Endothelial cell of umbilical vein (primary cell): ENCODE measurements at regions of chr10 and their contacts with region 1.

Region 1: DNA sequence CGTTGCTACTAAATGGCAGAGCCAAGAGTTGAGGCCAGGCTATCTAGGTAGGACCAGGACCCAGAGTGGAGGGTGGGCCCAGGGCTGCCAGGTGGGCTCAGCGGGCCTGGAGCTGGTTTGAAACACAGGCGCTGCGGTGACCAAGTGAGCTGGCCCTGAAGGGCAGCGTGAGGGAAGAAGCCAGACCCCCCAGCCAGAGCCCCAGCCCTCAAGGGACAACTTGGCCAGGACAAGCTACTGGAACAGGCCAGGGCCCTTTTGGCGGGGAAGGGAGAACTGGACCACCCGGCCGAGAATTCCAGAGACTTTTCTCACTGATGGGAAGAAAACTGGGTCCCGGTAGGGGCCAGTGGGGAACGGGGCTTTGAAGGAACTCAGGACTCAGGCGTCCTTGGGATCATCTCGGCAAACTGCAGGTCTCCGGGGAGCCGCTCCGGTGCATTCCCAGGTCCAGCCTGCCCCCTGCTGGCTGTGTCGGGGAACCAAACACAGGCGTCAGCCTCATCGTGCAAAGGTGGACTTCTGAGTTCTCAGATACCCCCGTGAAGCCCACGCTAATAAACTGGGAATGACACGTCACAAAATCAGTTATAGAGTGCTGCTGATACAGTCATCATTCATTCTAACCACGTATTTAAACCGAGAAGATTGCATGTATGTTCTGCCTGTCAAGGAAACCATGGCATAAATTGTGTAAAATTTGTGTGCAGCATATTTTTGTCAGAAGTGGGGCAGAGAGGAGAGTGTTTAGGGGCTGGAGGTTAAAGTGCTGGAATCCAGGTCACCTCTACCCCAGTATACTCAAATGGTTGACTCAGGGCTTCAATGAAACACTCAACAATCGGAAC is 76.0 kb upstream of the CPXM2 start:
- DNase-seq: peak; percentile 57
- H3K4me3 ChIP-seq: no peak overlapping the region
- H3K27ac ChIP-seq: no peak overlapping the region
- H3K4me1 ChIP-seq: no peaks in the 10 kb centered on the region
- H3K27me3 ChIP-seq: peaks cover 0 to 2% of the 10 kb centered on the region in 2 experiments
- CTCF ChIP-seq: peak; percentile 87 to 92
- POLR2A ChIP-seq: no peak

Region 2: DNA sequence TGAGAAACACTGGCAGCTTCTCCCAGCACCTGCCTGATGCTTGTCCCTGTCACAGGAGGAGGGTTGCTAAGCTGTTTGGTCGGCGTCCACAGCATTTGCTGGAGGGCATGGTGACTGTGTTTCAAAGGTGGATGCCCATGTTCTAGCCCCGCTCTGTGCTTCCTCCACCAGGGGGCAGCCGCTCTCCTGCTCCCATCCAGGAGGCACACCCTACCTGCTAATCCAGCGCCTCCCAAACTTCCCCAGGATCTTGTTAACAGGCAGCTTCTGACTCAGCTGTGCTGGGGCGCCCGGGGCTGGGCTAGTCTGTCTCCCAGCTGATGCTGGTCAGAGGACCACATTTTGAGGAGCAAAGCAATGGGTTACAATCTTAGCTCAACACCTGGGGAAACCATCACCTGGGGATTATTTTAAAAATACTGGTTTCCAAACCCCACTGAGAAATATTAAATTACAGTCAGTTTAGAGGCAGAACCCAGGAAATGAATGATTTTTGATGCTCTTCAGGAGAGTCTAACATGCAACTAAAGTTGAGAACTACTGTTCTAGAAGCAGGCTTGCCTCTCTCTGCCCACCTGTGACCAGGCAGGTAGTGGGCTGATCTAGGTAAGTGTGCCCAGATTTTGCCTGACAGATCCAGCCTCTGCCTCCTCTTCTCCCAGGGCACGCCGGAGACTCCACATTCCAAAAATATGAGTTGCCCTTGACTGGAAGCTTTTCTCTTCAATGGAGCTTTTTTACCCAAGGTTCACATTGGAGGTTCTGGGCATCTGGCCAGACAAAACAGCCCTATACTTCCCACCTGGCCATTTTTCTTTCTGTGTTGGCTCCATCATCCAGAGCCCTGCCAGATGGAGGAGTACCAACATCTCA is 394.1 kb before region 1 on chr10:
- CTCF ChIA-PET with region 1: interaction called, 13 read pairs
- POLR2A ChIA-PET with region 1: no interaction called
- dilution Hi-C with region 1: no loop called
- intact Hi-C with region 1: no loop called
- DNase-seq: peak; percentile 8
- H3K4me3 ChIP-seq: no peak overlapping the region
- H3K27ac ChIP-seq: no peak overlapping the region
- H3K4me1 ChIP-seq: no peaks in the 10 kb centered on the region
- H3K27me3 ChIP-seq: no peaks in the 10 kb centered on the region
- CTCF ChIP-seq: peak; percentile 47 to 70
- POLR2A ChIP-seq: no peak

Region 3: GRCh38 chr10:123582084-123582989 is 385.3 kb before region 1 on chr10:
- CTCF ChIA-PET with region 1: interaction called, 122 read pairs
- POLR2A ChIA-PET with region 1: no interaction called
- dilution Hi-C with region 1: no loop called
- intact Hi-C with region 1: loop called (anchors 1 kb)
- DNase-seq: peak; percentile 69
- H3K4me3 ChIP-seq: no peak overlapping the region
- H3K27ac ChIP-seq: no peak overlapping the region
- H3K4me1 ChIP-seq: no peaks in the 10 kb centered on the region
- H3K27me3 ChIP-seq: peaks cover 0 to 1% of the 10 kb centered on the region in 2 experiments
- CTCF ChIP-seq: peak; percentile 83 to 89
- POLR2A ChIP-seq: no peak

Region 4: DNA sequence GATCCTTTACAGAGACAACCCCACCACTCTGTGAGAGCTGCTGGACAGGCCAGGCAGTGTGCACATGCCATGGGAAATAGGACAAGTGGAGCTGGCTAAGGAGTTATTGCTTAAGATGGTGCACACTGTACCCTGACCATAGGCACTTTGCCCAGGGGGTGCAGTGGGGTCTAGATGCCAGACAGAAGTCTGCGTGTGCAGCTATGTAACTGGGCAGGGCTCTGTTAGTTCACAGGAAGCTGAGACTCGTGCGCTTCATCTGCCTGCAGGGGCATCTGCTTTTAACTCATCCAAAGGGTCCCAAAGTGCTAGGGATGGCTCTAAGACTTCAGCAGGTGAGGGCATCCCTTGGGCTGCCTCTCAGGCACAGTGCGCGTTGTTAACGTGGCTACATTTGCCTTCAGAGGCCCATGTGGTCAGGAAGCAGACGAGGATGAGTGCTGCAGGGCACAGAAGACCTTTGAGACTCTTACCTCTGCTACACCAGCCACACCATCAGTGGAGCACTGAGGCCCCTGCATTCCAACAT is 379.2 kb before region 1 on chr10:
- CTCF ChIA-PET with region 1: interaction called, 122 read pairs
- POLR2A ChIA-PET with region 1: no interaction called
- dilution Hi-C with region 1: no loop called
- intact Hi-C with region 1: no loop called
- DNase-seq: no peak
- H3K4me3 ChIP-seq: no peak overlapping the region
- H3K27ac ChIP-seq: no peak overlapping the region
- H3K4me1 ChIP-seq: no peaks in the 10 kb centered on the region
- H3K27me3 ChIP-seq: peaks cover 0 to 1% of the 10 kb centered on the region in 2 experiments
- CTCF ChIP-seq: no peak
- POLR2A ChIP-seq: no peak

Region 5: DNA sequence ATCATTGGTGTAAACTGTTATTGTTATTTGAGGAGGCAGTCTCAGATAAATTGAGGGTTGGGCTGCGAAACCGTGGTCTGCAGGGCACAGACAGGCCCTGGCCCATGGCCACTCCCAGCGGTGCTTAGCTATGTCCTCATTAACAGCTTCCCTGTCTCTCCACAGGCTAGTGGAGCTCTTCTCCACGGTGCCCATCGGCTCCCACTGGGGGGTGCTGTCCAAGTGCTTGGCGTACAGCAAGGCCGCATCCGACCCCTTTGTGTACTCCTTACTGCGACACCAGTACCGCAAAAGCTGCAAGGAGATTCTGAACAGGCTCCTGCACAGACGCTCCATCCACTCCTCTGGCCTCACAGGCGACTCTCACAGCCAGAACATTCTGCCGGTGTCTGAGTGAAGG is 279.9 kb before region 1 on chr10:
- CTCF ChIA-PET with region 1: interaction called, 3 read pairs
- POLR2A ChIA-PET with region 1: no interaction called
- dilution Hi-C with region 1: no loop called
- intact Hi-C with region 1: loop called (anchors 5 kb)
- DNase-seq: no peak
- H3K4me3 ChIP-seq: no peak overlapping the region
- H3K27ac ChIP-seq: no peak overlapping the region
- H3K4me1 ChIP-seq: no peaks in the 10 kb centered on the region
- H3K27me3 ChIP-seq: no peaks in the 10 kb centered on the region
- CTCF ChIP-seq: no peak
- POLR2A ChIP-seq: no peak

Region 6: GRCh38 chr10:123759501-123760031 is 208.1 kb before region 1 on chr10:
- CTCF ChIA-PET with region 1: no interaction called
- POLR2A ChIA-PET with region 1: no interaction called
- dilution Hi-C with region 1: no loop called
- intact Hi-C with region 1: loop called (anchors 10 kb)
- DNase-seq: no peak
- H3K4me3 ChIP-seq: no peak overlapping the region
- H3K27ac ChIP-seq: no peak overlapping the region
- H3K4me1 ChIP-seq: no peaks in the 10 kb centered on the region
- H3K27me3 ChIP-seq: no peaks in the 10 kb centered on the region
- CTCF ChIP-seq: no peak
- POLR2A ChIP-seq: no peak

Region 7: DNA sequence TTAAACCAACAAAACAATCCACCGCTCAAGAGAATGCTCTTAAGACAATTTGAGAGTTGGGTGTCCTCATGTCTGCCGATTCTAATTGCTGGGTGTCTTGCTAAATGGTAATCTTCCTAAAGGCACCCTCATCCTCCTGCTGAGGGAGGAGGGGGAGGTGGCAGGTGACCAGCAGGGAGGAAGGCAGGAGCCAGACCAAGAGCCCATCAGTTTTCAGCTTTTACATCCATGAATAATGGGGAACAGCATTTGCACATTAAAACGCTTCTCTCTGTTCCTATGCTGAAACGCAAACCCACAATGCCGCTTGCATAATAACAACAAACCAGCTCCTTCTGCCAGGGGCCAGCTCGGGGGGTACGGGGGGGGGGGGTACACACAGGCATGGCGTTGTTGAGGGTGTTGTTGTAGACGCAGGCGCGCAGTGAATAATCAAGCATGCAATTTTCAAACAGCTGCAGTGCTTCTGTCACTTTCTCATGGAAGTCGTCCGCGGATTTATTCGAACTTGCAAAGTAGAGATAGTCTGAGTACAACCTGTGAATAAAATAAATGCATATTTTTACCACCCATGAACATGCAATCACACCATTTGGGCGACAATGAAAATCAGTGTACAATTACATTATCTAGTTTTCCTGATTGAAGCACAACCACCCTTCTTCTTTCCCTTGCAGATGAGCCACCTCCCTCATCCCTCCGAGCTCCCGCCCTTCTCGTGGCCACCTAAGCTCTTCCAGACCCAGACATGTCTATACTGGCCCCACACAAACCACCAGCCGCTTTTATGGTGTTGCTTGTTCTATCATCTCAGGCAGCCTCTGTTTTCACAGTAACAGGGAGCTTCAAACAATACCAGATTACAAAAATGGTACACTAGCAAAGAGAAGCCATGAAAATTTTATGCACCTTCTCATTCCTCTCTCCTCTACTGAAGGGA is 53.5 kb after region 1 on chr10:
- CTCF ChIA-PET with region 1: no interaction called
- POLR2A ChIA-PET with region 1: no interaction called
- dilution Hi-C with region 1: no loop called
- intact Hi-C with region 1: no loop called
- DNase-seq: no peak
- H3K4me3 ChIP-seq: no peak overlapping the region
- H3K27ac ChIP-seq: no peak overlapping the region
- H3K4me1 ChIP-seq: no peaks in the 10 kb centered on the region
- H3K27me3 ChIP-seq: no peaks in the 10 kb centered on the region
- CTCF ChIP-seq: no peak
- POLR2A ChIP-seq: no peak